ENCODE measurements at regions of chr16 and their contacts with region 1.

Region 1: DNA sequence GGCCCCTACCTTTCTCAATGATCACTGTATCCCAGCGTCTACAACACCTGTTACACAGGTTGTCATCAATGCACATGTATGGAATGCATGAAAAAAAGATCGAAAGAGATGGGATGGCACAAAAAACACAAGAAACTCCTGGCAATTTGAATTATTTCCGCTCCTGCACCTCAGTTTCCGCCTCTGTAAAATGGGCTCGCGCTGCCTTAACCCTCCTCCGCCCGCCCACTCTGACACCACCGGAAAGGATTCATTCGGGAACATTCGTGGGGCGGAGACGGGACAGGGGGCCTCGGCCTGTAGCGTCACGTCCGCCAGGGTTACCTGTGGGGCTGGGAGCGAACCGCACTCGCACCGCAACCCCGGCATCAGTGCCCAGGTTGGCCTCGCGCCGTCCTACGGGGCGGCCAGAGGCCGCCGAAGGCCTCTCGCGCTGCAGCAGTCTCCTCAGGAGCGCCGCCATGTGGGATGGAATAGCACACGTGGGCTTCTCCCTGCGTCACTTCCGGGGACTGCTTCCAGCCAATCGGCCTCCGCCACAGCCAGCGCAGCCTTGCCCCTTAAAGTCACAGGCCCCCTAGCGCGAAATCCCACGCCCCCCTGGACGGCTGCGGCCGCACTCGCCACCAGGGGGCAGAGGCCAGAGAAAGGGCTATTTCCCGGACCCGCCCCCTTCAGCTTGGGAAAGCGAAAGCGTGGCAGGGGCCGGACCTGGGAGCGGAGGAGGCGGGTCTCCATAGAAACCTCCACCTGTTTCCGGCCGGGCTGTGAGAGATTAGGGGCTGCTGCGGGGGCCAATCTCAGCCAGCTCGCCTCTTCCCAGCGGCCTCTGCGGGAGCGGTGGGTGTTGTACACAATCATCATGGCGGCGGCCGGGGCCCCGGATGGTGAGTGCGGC is at the starts of genes EARS2 and UBFD1:
- DNase-seq: peak; percentile 97 to 98 (median 98)
- H3K4me3 ChIP-seq: peak within 1 kb of the TSS; percentile 95
- H3K27ac ChIP-seq: peak within 1 kb of the TSS; percentile 85 to 88
- H3K4me1 ChIP-seq: no peaks in the 10 kb centered on the region
- H3K27me3 ChIP-seq: no peaks in the 10 kb centered on the region
- CTCF ChIP-seq: peak; percentile 93 to 97 (median 95)
- EP300 ChIP-seq: peak; percentile 60
- POLR2A ChIP-seq: peak; percentile 33
- total RNA-seq, gene EARS2: 11.1 to 29.0 (median 18.5) TPM
- total RNA-seq, gene UBFD1: 45.2 to 67.4 (median 54.0) TPM

Region 2: GRCh38 chr16:23466066-23466885 is 90.9 kb before region 1 on chr16:
- intact Hi-C with region 1: loop called in 1 of 4 experiments (anchors 10 kb)
- DNase-seq: no peak
- H3K4me3 ChIP-seq: no peak overlapping the region
- H3K27ac ChIP-seq: no peak overlapping the region
- H3K4me1 ChIP-seq: no peaks in the 10 kb centered on the region
- H3K27me3 ChIP-seq: no peaks in the 10 kb centered on the region
- CTCF ChIP-seq: no peak
- EP300 ChIP-seq: no peak
- POLR2A ChIP-seq: no peak

Region 3: DNA sequence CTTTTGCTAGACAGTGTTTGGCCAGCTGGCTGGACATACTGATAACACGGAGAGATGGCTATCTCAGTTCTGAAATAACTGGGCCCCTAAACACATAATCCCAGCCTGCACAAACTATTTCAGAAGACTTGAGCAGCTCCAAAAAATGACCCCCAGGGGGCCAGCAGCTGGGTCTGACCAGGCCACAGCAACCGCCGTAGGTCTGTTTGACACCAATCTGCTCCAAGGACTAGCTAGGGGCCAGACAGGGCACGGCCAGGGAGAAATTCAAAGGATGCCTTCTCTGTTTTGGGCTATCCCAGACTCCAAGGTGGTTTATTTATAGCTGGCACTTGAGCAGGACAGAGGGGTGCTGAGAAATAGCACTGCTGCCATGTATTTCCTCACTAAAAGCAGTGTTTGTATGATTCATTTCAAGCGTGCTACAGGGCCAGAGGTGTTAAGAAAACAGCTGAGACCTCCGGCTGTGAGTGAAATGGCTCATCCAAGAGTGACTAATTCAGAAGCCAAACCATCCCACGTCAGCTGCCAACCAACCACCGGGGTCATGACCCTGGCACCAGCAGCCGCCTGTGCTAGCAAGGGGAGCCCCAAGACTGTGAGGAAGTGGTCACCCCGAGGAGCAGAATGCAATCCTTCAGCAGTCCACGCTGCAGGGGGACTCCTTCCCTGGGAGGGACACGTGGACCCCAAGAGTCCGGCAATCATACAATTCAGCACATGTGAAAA is 52.5 kb before region 1 on chr16:
- intact Hi-C with region 1: loop called in 1 of 4 experiments (anchors 10 kb)
- DNase-seq: peak; percentile 41 to 72 (median 60)
- H3K4me3 ChIP-seq: no peak overlapping the region
- H3K27ac ChIP-seq: peak overlapping the region in 1 of 2 donors; percentile 35
- H3K4me1 ChIP-seq: peaks cover 53% of the 10 kb centered on the region
- H3K27me3 ChIP-seq: no peaks in the 10 kb centered on the region
- CTCF ChIP-seq: no peak
- EP300 ChIP-seq: no peak
- POLR2A ChIP-seq: no peak

Region 4: DNA sequence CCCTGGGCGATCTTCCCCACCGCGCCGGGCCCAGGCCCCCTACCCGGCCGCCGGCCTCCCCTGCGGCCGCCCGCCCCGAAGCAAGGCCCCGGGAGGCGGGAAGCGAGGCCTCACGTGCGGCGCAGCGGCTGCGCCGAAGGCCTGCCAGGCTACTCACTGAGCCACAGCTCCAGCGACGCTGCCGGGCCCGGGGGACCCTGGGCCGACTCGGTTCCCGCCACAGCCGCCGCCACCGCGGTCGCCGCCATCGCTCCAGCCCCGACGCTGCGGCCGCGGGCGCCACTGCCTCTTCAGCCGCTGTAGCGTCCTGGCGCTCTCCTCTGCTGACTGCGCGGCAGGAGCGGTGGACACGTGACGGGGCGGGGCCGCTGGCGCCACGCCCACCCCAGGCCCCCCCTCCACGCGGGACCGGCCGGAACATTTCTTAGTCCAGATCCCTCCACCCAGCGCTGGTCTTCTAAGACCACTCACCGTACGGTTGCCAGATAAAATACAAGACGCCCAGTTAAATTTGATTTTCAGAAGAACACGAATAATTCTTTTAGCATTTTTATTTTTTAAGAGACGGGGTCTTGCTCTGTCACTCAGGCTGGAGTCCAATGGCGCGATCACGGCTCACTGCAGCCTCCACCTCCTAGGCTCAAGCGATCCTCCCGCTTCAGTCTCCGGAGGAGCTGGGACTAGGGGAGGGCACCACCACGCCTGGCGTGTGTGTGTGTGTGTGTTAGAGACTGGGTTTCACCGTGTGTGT is 46.8 kb before region 1 on chr16 and contains the start of gene GGA2:
- intact Hi-C with region 1: loop called in 2 of 4 experiments (anchors 5 to 10 kb)
- DNase-seq: peak; percentile 83 to 93 (median 88)
- H3K4me3 ChIP-seq: peak within 1 kb of the TSS; percentile 74
- H3K27ac ChIP-seq: peak within 1 kb of the TSS in 1 of 2 donors; percentile 87
- H3K4me1 ChIP-seq: peaks cover 17% of the 10 kb centered on the region
- H3K27me3 ChIP-seq: no peaks in the 10 kb centered on the region
- CTCF ChIP-seq: peak in 1 of 3 donors; percentile 34
- EP300 ChIP-seq: no peak
- POLR2A ChIP-seq: peak; percentile 80
- total RNA-seq, gene GGA2: 27.1 to 111 (median 83.3) TPM